Mammary epithelial cell (primary cell): ENCODE measurements at regions of chr10 and their contacts with region 1.

Region 1: DNA sequence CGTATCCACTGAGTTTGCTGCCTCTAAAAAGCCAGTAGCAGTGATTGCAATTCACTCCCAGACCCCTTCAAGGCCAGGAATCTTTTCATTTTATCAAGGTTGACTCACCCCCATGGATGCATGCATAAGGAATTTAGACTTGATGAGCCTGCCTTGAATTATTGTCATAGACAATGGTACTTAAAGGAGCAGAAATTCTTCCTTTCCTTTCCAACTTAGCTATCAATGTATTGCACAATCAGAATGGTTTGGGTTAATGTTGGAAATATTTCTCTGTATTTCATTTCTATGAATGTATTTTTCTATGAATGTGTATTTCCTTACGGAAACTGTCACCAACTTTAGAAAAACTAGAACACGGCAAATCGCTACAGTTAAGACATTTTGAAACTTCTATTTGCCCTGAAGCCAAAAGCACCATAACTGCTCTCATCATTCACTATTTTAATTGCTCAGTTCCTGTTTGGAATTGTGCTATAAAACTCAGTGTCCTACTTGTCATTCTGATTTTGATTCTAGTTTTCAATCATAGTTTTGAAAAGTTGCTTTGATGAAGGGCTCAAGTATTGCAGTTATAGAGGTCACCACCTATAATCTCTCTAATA is 355.7 kb upstream of the AKR1E2 start:
- DNase-seq: peak; percentile 13
- H3K4me3 ChIP-seq: no peak overlapping the region
- H3K27ac ChIP-seq: no peak overlapping the region
- H3K4me1 ChIP-seq: peaks cover 8% of the 10 kb centered on the region
- H3K27me3 ChIP-seq: no peaks in the 10 kb centered on the region
- CTCF ChIP-seq: no peak

Region 2: DNA sequence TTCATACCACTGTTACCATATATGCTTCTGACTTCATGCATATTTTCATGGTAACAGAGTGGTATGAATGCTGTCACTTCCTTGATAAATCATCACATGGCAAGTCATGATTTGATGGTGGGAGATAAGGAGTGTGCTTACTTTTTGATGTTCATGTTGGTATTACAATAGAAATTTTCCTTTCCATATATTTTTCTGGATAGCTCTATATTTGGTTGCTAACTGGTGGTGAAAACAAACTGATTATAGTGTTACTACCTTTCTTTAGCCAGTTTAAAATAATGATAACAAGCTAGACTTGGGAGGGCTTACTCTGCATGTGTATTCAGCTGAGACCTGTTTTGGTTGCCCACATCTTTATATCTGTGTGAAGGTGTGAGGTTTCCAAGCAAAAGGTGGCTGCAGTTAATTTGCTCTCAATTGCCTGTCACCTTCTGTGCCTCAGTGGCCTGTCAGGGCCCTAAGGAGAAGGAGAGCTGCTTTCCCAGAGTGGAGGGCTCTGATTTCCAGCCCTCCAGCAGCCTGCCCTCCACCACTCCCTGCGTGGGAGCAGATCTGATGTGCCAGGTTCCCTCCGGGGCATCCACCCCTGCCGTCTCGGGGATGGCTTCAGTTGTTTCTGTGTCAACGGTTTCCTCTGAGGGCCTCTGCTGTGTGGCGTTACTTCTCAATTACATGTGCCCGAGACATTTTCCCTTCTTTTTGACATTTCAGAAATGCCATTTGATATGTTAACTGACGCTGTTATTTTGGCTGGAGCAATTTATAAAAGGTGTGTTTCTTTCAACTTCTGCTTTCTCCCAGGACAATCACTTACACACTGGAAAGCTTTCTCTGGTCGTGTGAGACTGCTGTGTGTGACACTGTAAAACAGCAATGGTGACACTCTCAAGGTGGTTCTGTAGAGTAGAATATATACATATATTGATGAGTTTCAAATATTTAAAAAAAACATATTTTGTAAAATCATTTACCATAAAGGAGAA is 577.6 kb before region 1 on chr10:
- CTCF ChIA-PET with region 1: no interaction called
- dilution Hi-C with region 1: no loop called
- in situ Hi-C with region 1: no loop called
- intact Hi-C with region 1: no loop called
- DNase-seq: peak; percentile 42
- H3K4me3 ChIP-seq: no peak overlapping the region
- H3K27ac ChIP-seq: peak overlapping the region; percentile 25
- H3K4me1 ChIP-seq: peaks cover 50% of the 10 kb centered on the region
- H3K27me3 ChIP-seq: no peaks in the 10 kb centered on the region
- CTCF ChIP-seq: no peak

Region 3: DNA sequence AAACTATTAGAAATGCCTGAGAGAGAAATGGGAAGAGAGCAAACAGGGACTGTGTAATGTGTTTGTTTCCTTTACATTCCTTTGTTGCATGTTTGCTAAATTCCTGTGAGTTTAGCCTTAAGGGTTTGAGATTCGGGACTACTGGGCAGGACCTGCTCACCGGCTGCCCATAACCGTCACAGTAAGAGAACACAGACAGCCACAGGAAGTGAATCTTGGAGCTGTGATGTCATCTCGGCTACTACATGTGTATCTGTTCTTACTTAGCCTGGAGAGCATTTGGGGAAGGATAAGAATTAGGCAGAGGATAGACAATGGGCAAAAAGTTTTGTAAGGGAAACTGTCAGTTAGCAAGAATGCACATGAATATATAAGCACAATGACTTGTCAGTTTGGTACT is 200.2 kb before region 1 on chr10:
- CTCF ChIA-PET with region 1: no interaction called
- dilution Hi-C with region 1: no loop called
- in situ Hi-C with region 1: no loop called
- intact Hi-C with region 1: no loop called
- DNase-seq: peak; percentile 75
- H3K4me3 ChIP-seq: no peak overlapping the region
- H3K27ac ChIP-seq: peak overlapping the region; percentile 10
- H3K4me1 ChIP-seq: peaks cover 18% of the 10 kb centered on the region
- H3K27me3 ChIP-seq: no peaks in the 10 kb centered on the region
- CTCF ChIP-seq: no peak

Region 4: DNA sequence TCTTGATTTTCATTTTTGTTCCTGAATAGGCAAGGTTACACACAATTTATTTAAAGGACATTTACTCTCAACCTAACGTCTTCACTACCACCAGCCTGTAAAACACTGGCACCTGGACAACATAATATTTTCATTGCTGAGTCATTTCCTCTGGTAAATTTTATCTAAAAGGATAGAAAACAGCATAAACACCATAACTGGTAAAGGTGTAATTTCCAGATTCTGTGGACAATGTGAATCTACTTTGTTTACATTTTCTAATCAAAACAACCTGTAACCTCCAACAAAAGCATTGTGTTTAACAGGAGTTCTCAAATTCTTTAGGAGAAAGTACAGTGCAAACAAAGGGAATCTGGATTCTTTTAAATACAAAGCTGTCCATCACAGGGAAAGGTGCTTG is 116.4 kb before region 1 on chr10:
- CTCF ChIA-PET with region 1: no interaction called
- dilution Hi-C with region 1: no loop called
- in situ Hi-C with region 1: no loop called
- intact Hi-C with region 1: loop called (anchors 1 kb)
- DNase-seq: peak; percentile 83
- H3K4me3 ChIP-seq: peak overlapping the region in 1 of 3 experiments; percentile 27
- H3K27ac ChIP-seq: peak overlapping the region; percentile 100
- H3K4me1 ChIP-seq: peaks cover 40% of the 10 kb centered on the region
- H3K27me3 ChIP-seq: no peaks in the 10 kb centered on the region
- CTCF ChIP-seq: no peak

Region 5: GRCh38 chr10:4399556-4399955 is 70.8 kb before region 1 on chr10:
- CTCF ChIA-PET with region 1: no interaction called
- dilution Hi-C with region 1: loop called (anchors 5 kb)
- in situ Hi-C with region 1: no loop called
- intact Hi-C with region 1: no loop called
- DNase-seq: no peak
- H3K4me3 ChIP-seq: no peak overlapping the region
- H3K27ac ChIP-seq: no peak overlapping the region
- H3K4me1 ChIP-seq: no peaks in the 10 kb centered on the region
- H3K27me3 ChIP-seq: no peaks in the 10 kb centered on the region
- CTCF ChIP-seq: no peak

Region 6: DNA sequence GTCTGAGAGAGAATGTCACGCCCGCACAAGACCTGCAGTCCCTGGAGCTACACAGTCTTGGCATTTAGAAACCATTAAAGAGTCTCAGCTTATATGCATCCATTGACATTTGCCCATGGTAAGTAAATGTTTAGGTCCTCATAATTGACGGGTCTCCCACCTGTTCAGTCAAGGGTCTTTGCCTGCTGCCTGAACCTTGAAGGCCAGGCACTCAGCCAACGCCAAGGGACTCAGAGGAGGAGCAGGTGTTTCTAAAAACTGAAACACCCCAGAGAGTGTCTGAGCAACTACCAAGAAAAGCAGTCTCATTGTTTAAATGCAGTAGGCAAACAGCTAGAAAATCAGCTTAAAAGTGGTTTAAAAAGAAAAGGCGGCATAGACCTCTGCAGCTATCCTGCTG is 91.0 kb after region 1 on chr10:
- CTCF ChIA-PET with region 1: no interaction called
- dilution Hi-C with region 1: loop called (anchors 5 kb)
- in situ Hi-C with region 1: no loop called
- intact Hi-C with region 1: no loop called
- DNase-seq: no peak
- H3K4me3 ChIP-seq: no peak overlapping the region
- H3K27ac ChIP-seq: no peak overlapping the region
- H3K4me1 ChIP-seq: no peaks in the 10 kb centered on the region
- H3K27me3 ChIP-seq: no peaks in the 10 kb centered on the region
- CTCF ChIP-seq: no peak